Gastrocnemius medialis (tissue), 4 donors: ENCODE measurements at regions of chr12 and their contacts with region 1.

Region 1: DNA sequence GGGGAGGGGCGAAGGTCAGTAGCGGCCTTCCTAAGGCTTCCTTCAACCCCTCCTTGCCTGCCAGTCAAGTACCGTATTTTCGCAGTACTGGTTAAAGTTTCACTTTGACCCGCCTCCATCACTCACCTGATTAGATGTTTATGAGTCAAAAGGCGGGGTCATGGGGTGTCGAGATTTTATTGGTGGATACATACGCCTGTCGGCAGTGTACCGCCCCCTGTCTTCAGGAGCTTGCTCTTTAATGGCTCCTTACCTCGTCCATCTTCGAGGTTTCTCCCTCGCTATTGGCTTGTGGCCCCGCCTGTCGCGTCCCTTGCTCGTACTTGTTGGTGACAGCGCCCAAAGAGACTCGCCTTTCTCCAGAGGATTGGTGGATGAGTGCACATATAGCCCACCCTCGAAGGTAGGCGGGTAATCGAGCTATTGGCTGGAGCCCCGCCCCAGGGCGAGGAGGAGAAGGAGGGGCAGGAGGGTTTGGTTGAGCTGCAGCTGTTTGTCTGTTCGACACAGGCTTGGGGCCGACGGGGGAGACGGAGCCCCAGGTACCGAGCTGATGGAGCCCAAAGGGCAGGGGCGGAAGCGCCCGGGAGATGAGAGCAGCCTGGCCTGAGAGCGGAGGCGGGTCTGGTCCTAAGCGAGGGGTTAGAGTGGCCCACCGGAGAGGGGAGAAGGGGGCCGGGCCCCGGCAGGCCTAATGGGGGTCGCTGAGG is at the start of gene RAB5B:
- DNase-seq: peak; percentile 100
- ATAC-seq: peak; percentile 90 to 96
- H3K4me3 ChIP-seq: peak within 1 kb of the TSS; percentile 86 to 100 (median 98)
- H3K27ac ChIP-seq: peak within 1 kb of the TSS; percentile 95 to 100 (median 98)
- H3K4me1 ChIP-seq: peaks cover 28 to 36% of the 10 kb centered on the region in 2 donors
- H3K27me3 ChIP-seq: no peaks in the 10 kb centered on the region
- CTCF ChIP-seq: peak in 3 of 5 experiments; percentile 14 to 60 (median 37)
- POLR2A ChIP-seq: peak; percentile 97
- total RNA-seq, gene RAB5B: 75.5 to 84.9 (median 81.8) TPM

Region 2: DNA sequence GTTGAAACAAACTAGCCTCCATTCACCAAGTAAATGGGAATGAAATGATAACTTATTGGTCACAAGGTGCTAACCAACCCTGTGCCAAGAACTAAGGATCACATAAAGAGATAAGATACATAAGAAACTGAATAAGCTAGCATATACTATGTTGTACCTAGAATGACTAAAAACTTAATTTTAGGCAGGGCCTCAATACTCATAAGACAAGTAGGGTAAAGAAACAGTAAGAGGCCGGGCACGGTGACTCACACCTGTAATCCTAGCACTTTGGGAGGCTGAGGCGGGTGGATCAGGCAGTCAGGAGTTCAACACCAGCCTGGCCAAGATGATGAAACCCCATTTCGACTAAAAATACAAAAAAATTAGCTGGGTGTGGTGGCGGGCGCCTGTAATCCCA is 213.1 kb before region 1 on chr12:
- in situ Hi-C with region 1: no loop called
- intact Hi-C with region 1: no loop called
- DNase-seq: no peak
- ATAC-seq: no peak
- H3K4me3 ChIP-seq: no peak overlapping the region
- H3K27ac ChIP-seq: no peak overlapping the region
- H3K4me1 ChIP-seq: no peaks in the 10 kb centered on the region
- H3K27me3 ChIP-seq: no peaks in the 10 kb centered on the region
- CTCF ChIP-seq: no peak
- POLR2A ChIP-seq: no peak

Region 3: GRCh38 chr12:56041552-56042429 is 68.0 kb after region 1 on chr12 and contains the start of gene RPS26:
- in situ Hi-C with region 1: no loop called
- intact Hi-C with region 1: loop called (anchors 1 kb)
- DNase-seq: peak; percentile 96 to 97
- ATAC-seq: peak; percentile 98 to 99
- H3K4me3 ChIP-seq: peak within 1 kb of the TSS; percentile 66 to 94 (median 86)
- H3K27ac ChIP-seq: peak within 1 kb of the TSS; percentile 87 to 98 (median 94)
- H3K4me1 ChIP-seq: peaks cover 15 to 19% of the 10 kb centered on the region in 2 donors
- H3K27me3 ChIP-seq: no peaks in the 10 kb centered on the region
- CTCF ChIP-seq: peak; percentile 11 to 70 (median 40)
- POLR2A ChIP-seq: peak; percentile 86 to 90
- total RNA-seq, gene RPS26: 618 to 1,648 (median 1,209) TPM